Activated T-helper 2 cell treated with anti-CD3 and anti-CD28 coated beads, Interferon-gamma antibody, Interleukin-2, Interleukin-4, amounts not matched to agents 10 μg/mL and 5 μg/mL and 100 μg/mL, durations not matched to agents 14 hours and 24 hours and 36 hours (primary cell): ENCODE measurements at regions of chr16 and their contacts with region 1.

Region 1: DNA sequence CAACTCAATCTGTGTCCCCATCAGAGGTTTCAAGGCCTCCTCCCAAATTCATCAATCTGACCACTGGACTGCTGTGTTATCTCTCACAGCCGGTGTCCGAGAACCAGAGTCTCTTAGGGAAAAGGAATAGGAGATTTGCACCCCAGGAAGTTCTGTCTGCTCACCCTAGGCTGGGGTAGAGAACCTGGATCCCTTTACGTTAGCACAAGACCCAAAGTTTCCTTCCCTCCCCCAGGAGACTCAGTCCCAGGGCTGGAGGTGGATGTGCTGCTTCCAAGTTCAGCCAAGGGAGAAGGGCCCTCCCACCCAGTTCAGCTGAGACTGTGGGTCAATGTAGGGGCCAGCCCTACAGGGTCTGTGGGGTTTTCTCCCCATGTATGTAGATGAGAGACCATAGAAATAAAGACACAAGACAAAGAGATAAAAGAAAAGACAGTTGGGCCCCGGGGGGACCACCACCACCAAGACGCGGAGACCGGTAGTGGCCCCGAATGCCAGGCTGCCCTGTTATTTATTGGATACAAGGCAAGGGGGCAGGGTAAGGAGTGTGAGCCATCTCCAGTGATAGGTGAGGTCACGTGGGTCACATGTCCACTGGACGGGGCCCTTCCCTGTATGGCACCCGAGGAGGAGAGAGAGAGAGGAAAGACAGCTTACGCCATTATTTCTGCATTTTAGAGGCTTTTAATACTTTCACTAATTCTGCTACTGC is 22.7 kb upstream of the OR1F1 start:
- DNase-seq: no peak
- H3K4me3 Mint-ChIP-seq: peak overlapping the region; percentile 30
- H3K27ac Mint-ChIP-seq: peak overlapping the region; percentile 68
- H3K4me1 Mint-ChIP-seq: peaks cover 14% of the 10 kb centered on the region
- H3K27me3 Mint-ChIP-seq: peaks cover 19% of the 10 kb centered on the region

Region 2: DNA sequence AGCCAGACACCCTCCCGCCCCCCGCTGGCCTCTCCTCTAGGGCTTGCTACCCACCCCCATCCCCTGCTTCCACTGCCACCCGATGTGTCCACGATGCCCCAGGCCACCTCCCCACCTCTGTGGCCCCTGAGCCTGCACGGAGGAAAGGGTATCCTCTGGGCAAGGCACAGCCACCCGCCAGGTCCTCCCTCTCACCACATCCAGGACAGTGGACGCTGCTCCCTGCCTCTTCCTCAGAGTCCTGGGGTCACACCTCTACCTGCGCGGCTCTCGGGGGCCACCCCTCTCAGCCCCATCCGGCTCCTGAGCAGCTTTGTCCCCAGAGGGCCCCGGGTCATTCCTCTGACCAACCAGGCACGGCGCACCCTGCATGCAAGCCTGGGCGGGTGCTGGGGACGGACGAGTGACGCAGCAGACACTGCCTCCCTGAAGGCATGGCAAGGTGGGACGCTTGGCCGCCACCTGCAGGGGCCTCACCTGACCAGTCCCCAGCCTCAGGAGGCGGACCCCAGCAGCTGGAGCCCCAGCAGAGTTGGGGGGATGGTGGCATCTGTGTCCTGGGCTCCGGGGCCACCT is 228.7 kb before region 1 on chr16:
- intact Hi-C with region 1: no loop called
- DNase-seq: no peak
- H3K4me3 Mint-ChIP-seq: no peak overlapping the region
- H3K27ac Mint-ChIP-seq: no peak overlapping the region
- H3K4me1 Mint-ChIP-seq: peaks cover 9% of the 10 kb centered on the region
- H3K27me3 Mint-ChIP-seq: no peaks in the 10 kb centered on the region

Region 3: GRCh38 chr16:3029537-3030402 is 135.5 kb before region 1 on chr16:
- intact Hi-C with region 1: loop called (anchors 5 kb)
- DNase-seq: peak; percentile 52
- H3K4me3 Mint-ChIP-seq: peak overlapping the region; percentile 66
- H3K27ac Mint-ChIP-seq: peak overlapping the region; percentile 49
- H3K4me1 Mint-ChIP-seq: peaks cover 23% of the 10 kb centered on the region
- H3K27me3 Mint-ChIP-seq: peaks cover 28% of the 10 kb centered on the region

Region 4: GRCh38 chr16:3045357-3045728 is 119.9 kb before region 1 on chr16:
- intact Hi-C with region 1: loop called (anchors 5 kb)
- DNase-seq: peak; percentile 41
- H3K4me3 Mint-ChIP-seq: peak overlapping the region; percentile 81
- H3K27ac Mint-ChIP-seq: peak overlapping the region; percentile 21
- H3K4me1 Mint-ChIP-seq: peaks cover 27% of the 10 kb centered on the region
- H3K27me3 Mint-ChIP-seq: peaks cover 26% of the 10 kb centered on the region

Region 5: GRCh38 chr16:3134564-3135417 is 30.5 kb before region 1 on chr16 and contains the start of gene ZNF213:
- intact Hi-C with region 1: loop called (anchors 2 kb)
- DNase-seq: peak; percentile 93
- H3K4me3 Mint-ChIP-seq: peak within 1 kb of the TSS; percentile 98
- H3K27ac Mint-ChIP-seq: peak within 1 kb of the TSS; percentile 96
- H3K4me1 Mint-ChIP-seq: peaks cover 19% of the 10 kb centered on the region
- H3K27me3 Mint-ChIP-seq: no peaks in the 10 kb centered on the region
- total RNA-seq, gene ZNF213: 9.1 and 9.3 TPM in 2 replicates